Mucosa of descending colon (tissue), 3 donors: ENCODE measurements at regions of chr10 and their contacts with region 1.

Region 1: GRCh38 chr10:80509403-80510161 is 28.1 kb upstream of the SH2D4B start:
- DNase-seq: no peak
- ATAC-seq: no peak
- H3K4me3 ChIP-seq: no peak overlapping the region
- H3K4me1 ChIP-seq: peaks cover 13% of the 10 kb centered on the region
- CTCF ChIP-seq: no peak

Region 2: GRCh38 chr10:79422178-79422892 is 1087.2 kb before region 1 on chr10:
- intact Hi-C with region 1: no loop called
- DNase-seq: peak in 2 of 3 donors; percentile 24 to 54
- ATAC-seq: peak; percentile 28
- H3K4me3 ChIP-seq: no peak overlapping the region
- H3K4me1 ChIP-seq: peaks cover 7% of the 10 kb centered on the region
- CTCF ChIP-seq: no peak

Region 3: DNA sequence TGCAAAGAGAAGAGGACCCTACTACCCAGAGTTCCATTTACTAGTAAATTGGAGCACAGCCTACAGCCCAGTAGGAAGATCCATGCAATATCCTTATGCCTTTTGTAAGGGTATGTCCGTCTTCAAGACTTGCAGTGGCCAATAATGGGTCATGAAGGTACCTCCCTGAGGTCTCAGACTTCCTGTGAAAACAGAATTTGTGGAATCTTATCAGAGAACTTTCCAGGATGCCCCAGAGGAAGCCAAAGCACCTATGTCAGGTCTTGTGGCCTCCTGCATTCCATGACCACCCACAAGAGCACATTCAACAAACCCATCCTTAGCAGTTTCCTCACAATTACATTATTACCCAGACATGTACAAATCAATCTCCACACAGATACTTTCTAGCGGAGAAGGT is 119.8 kb before region 1 on chr10:
- intact Hi-C with region 1: loop called in 1 of 2 experiments (anchors 5 kb)
- DNase-seq: no peak
- ATAC-seq: no peak
- H3K4me3 ChIP-seq: no peak overlapping the region
- H3K4me1 ChIP-seq: no peaks in the 10 kb centered on the region
- CTCF ChIP-seq: no peak

Region 4: GRCh38 chr10:80444646-80445319 is 64.8 kb before region 1 on chr10:
- intact Hi-C with region 1: loop called (anchors 2 to 5 kb)
- DNase-seq: peak in 2 of 3 donors; percentile 68 to 86
- ATAC-seq: peak; percentile 94
- H3K4me3 ChIP-seq: no peak overlapping the region
- H3K4me1 ChIP-seq: no peaks in the 10 kb centered on the region
- CTCF ChIP-seq: peak; percentile 46

Region 5: DNA sequence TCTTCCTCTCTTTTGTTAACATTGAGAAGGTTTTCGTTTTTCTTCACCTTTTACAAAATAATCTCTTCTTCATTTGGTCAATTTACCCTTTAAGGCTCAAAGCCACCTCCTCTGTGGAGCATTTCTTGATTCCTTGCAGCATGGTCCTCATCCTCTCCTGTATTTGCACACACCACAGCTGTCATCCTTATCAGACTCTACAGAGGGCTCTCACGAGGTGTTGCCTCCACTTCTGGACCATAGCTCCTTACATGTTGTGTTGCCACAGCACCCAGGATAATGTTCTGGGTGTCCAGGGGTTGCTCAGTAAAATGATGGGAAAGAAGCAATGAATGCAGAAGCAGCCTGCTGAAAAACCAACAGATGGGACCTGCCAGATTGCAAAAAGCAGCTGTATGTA is 220.9 kb after region 1 on chr10:
- intact Hi-C with region 1: no loop called
- DNase-seq: no peak
- ATAC-seq: no peak
- H3K4me3 ChIP-seq: no peak overlapping the region
- H3K4me1 ChIP-seq: no peaks in the 10 kb centered on the region
- CTCF ChIP-seq: no peak